ENCODE measurements at regions of chr2 and their contacts with region 1.

Region 1: GRCh38 chr2:236352761-236353593 is 88.8 kb upstream of the ASB18 start:
- DNase-seq: peak in 6 of 9 experiments; percentile 17 to 64 (median 40)
- ATAC-seq: peak; percentile 62
- H3K4me3 ChIP-seq: no peak overlapping the region
- H3K4me3 Mint-ChIP-seq: no peak overlapping the region
- H3K27ac ChIP-seq: no peak overlapping the region
- H3K27ac Mint-ChIP-seq: no peak overlapping the region
- H3K4me1 ChIP-seq: no peaks in the 10 kb centered on the region
- H3K4me1 Mint-ChIP-seq: peaks cover 2% of the 10 kb centered on the region
- H3K27me3 ChIP-seq: no peaks in the 10 kb centered on the region
- H3K27me3 Mint-ChIP-seq: peaks cover 11% of the 10 kb centered on the region
- CTCF ChIP-seq: peak; percentile 96

Region 2: GRCh38 chr2:236264256-236264655 is 88.7 kb before region 1 on chr2 and contains the start of gene ASB18:
- CTCF ChIA-PET with region 1: no interaction called
- POLR2A ChIA-PET with region 1: no interaction called
- intact Hi-C with region 1: no loop called
- DNase-seq: no peak
- ATAC-seq: no peak
- H3K4me3 ChIP-seq: no peak within 1 kb of the TSS
- H3K4me3 Mint-ChIP-seq: no peak within 1 kb of the TSS
- H3K27ac ChIP-seq: no peak within 1 kb of the TSS
- H3K27ac Mint-ChIP-seq: no peak within 1 kb of the TSS
- H3K4me1 ChIP-seq: no peaks in the 10 kb centered on the region
- H3K4me1 Mint-ChIP-seq: no peaks in the 10 kb centered on the region
- H3K27me3 ChIP-seq: no peaks in the 10 kb centered on the region
- H3K27me3 Mint-ChIP-seq: peaks cover 28% of the 10 kb centered on the region
- CTCF ChIP-seq: no peak
- total RNA-seq, gene ASB18: not detected

Region 3: DNA sequence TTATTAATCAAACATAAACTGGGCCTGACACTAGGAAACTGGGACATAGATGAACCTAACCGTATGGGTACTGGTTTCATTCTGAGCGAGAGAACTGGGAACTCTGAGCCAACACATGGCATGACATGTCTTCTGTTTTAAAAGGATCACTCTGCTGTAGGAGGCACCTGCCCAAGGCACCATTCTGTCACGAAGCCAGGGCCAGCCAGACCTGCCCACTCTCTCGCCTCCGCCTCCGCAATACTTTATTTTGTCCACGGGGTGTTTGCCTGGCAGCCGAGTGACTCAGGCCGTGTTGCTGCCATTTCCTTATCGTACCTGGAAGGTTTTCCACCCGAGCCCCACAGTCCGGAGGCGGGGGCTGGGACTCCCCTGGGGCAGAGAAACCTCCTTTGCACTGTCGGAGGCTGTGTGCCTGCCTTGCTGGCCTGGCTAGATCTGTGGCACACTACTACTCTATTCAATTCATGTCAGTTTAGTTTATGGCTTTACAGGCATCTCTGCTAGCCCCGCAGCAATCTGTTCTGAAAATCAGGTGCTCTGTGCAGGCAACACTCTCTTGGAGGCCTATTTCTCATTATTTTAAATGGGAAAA is 96.3 kb after region 1 on chr2:
- CTCF ChIA-PET with region 1: no interaction called
- POLR2A ChIA-PET with region 1: no interaction called
- intact Hi-C with region 1: no loop called
- DNase-seq: no peak
- ATAC-seq: no peak
- H3K4me3 ChIP-seq: no peak overlapping the region
- H3K4me3 Mint-ChIP-seq: no peak overlapping the region
- H3K27ac ChIP-seq: no peak overlapping the region
- H3K27ac Mint-ChIP-seq: no peak overlapping the region
- H3K4me1 ChIP-seq: no peaks in the 10 kb centered on the region
- H3K4me1 Mint-ChIP-seq: no peaks in the 10 kb centered on the region
- H3K27me3 ChIP-seq: no peaks in the 10 kb centered on the region
- H3K27me3 Mint-ChIP-seq: peaks cover 15% of the 10 kb centered on the region
- CTCF ChIP-seq: no peak

Region 4: GRCh38 chr2:236753606-236754270 is 400.8 kb after region 1 on chr2:
- CTCF ChIA-PET with region 1: no interaction called
- POLR2A ChIA-PET with region 1: no interaction called
- intact Hi-C with region 1: no loop called
- DNase-seq: no peak
- ATAC-seq: no peak
- H3K4me3 ChIP-seq: no peak overlapping the region
- H3K4me3 Mint-ChIP-seq: no peak overlapping the region
- H3K27ac ChIP-seq: no peak overlapping the region
- H3K27ac Mint-ChIP-seq: no peak overlapping the region
- H3K4me1 ChIP-seq: no peaks in the 10 kb centered on the region
- H3K4me1 Mint-ChIP-seq: no peaks in the 10 kb centered on the region
- H3K27me3 ChIP-seq: no peaks in the 10 kb centered on the region
- H3K27me3 Mint-ChIP-seq: peaks cover 13% of the 10 kb centered on the region
- CTCF ChIP-seq: no peak

Region 5: GRCh38 chr2:237060534-237061312 is 707.7 kb after region 1 on chr2:
- CTCF ChIA-PET with region 1: interaction called, 37 read pairs
- POLR2A ChIA-PET with region 1: no interaction called
- intact Hi-C with region 1: loop called in 1 of 2 experiments (anchors 1 kb)
- DNase-seq: peak in 3 of 9 experiments; percentile 11 to 56 (median 39)
- ATAC-seq: no peak
- H3K4me3 ChIP-seq: no peak overlapping the region
- H3K4me3 Mint-ChIP-seq: no peak overlapping the region
- H3K27ac ChIP-seq: no peak overlapping the region
- H3K27ac Mint-ChIP-seq: no peak overlapping the region
- H3K4me1 ChIP-seq: no peaks in the 10 kb centered on the region
- H3K4me1 Mint-ChIP-seq: no peaks in the 10 kb centered on the region
- H3K27me3 ChIP-seq: no peaks in the 10 kb centered on the region
- H3K27me3 Mint-ChIP-seq: no peaks in the 10 kb centered on the region
- CTCF ChIP-seq: peak; percentile 52

Region 6: GRCh38 chr2:237072067-237072931 is 719.3 kb after region 1 on chr2:
- CTCF ChIA-PET with region 1: interaction called, 9 read pairs
- POLR2A ChIA-PET with region 1: no interaction called
- intact Hi-C with region 1: loop called (anchors 1 kb)
- DNase-seq: peak; percentile 47 to 83 (median 69)
- ATAC-seq: peak; percentile 48
- H3K4me3 ChIP-seq: no peak overlapping the region
- H3K4me3 Mint-ChIP-seq: no peak overlapping the region
- H3K27ac ChIP-seq: no peak overlapping the region
- H3K27ac Mint-ChIP-seq: no peak overlapping the region
- H3K4me1 ChIP-seq: no peaks in the 10 kb centered on the region
- H3K4me1 Mint-ChIP-seq: no peaks in the 10 kb centered on the region
- H3K27me3 ChIP-seq: no peaks in the 10 kb centered on the region
- H3K27me3 Mint-ChIP-seq: no peaks in the 10 kb centered on the region
- CTCF ChIP-seq: peak; percentile 98

Measured in CD8-positive, alpha-beta T cell (primary cell).